ENCODE measurements at regions of chr15 and their contacts with region 1.

Region 1: DNA sequence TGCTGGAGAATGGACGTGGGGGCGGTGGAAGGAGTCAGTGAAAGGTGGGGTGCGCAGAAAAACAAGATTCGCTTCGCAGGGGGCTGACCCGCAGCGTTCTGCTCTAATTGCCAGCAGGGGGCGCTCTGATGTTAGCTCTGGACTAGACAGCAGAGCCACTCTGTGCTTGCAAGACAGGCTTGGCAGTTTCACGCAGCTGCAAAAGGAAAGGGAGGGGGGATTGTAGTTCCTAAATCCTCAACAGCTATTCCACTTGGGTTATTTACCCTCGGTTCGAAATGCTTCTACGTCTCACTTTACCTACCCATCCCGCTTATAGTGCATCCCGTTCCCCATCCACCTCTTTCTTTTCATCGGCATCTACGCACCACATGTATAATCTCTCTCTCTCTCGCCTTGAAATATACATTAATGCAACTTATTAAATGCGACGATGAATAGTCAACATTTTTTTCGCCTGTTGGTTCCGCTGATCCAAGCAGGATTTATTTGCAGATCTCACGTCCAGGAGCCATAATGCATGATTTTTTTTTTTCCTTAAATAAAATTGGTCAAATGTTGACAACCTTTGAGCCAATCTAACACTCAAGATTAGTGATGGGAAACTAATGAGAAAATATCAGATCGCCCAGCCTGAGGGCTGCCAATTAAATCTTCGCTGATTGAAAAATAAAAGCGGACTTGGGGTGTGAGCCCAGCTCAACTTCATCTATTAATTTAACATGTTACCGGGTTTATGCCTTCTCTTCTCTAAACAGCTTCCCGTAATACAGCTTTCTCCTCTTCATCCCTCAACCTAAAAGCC is 216.4 kb downstream of the MEIS2 start:
- DNase-seq: no peak
- H3K4me3 ChIP-seq: peak overlapping the region in 3 of 4 donors; percentile 11 to 54 (median 36)
- H3K27ac ChIP-seq: peak overlapping the region in 2 of 4 donors; percentile 0 to 8
- H3K4me1 ChIP-seq: peaks cover 0 to 53% (median 9%) of the 10 kb centered on the region in 3 donors
- H3K27me3 ChIP-seq: peaks cover 0 to 98% (median 8%) of the 10 kb centered on the region in 4 donors
- CTCF ChIP-seq: peak; percentile 44 to 92 (median 85)
- POLR2A ChIP-seq: no peak

Region 2: GRCh38 chr15:37109872-37110572 is 226.1 kb after region 1 on chr15:
- intact Hi-C with region 1: loop called (anchors 5 kb)
- DNase-seq: no peak
- H3K4me3 ChIP-seq: peak overlapping the region; percentile 21 to 71 (median 52)
- H3K27ac ChIP-seq: peak overlapping the region; percentile 30 to 95 (median 81)
- H3K4me1 ChIP-seq: peaks cover 0 to 33% (median 0%) of the 10 kb centered on the region in 3 donors
- H3K27me3 ChIP-seq: peaks cover 0 to 32% (median 0%) of the 10 kb centered on the region in 4 donors
- CTCF ChIP-seq: no peak
- POLR2A ChIP-seq: peak in 1 of 4 donors; percentile 21

Region 3: GRCh38 chr15:37134699-37135131 is 250.8 kb after region 1 on chr15:
- intact Hi-C with region 1: loop called (anchors 5 kb)
- DNase-seq: no peak
- H3K4me3 ChIP-seq: no peak overlapping the region
- H3K27ac ChIP-seq: no peak overlapping the region
- H3K4me1 ChIP-seq: no peaks in the 10 kb centered on the region
- H3K27me3 ChIP-seq: no peaks in the 10 kb centered on the region
- CTCF ChIP-seq: peak; percentile 33 to 77 (median 67)
- POLR2A ChIP-seq: no peak

Region 4: DNA sequence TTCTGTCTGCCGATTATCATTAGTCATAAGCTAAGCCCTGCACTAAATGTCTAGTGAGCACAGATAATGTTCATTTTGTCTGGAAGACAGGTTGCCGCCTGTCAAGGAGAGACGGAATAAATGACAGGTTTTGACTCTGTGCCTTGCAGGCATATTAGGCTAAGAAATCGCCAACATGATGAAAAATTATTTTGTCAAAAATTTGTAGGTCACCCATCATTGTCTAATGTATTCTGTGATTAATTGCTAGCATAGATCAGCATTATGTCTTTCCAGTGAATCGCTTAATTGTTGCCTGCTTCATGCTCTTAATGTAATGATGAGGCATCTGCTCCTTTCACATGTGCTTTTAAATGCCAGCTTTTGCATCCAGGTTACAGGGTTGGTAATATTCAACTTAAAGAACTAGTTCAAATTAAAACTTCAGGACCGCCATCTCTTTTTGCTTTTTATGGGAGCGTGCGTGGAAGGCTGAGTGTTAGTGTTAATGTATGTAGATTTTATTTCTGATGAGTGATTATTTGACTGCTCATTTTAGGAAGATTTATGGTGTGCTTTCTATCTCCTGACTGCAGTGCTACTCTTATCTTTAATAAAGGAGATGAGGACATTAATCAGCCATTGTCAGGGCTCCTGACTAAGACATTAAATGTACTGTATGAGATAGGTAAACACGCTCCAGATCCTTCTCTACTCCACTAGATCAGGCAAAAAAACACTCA is 337.2 kb after region 1 on chr15:
- intact Hi-C with region 1: no loop called
- DNase-seq: no peak
- H3K4me3 ChIP-seq: no peak overlapping the region
- H3K27ac ChIP-seq: no peak overlapping the region
- H3K4me1 ChIP-seq: no peaks in the 10 kb centered on the region
- H3K27me3 ChIP-seq: no peaks in the 10 kb centered on the region
- CTCF ChIP-seq: no peak
- POLR2A ChIP-seq: no peak

Measured in esophagus squamous epithelium (tissue), 5 donors.